AG04450 (cell line): ENCODE measurements at regions of chr18 and their contacts with region 1.

Region 1: DNA sequence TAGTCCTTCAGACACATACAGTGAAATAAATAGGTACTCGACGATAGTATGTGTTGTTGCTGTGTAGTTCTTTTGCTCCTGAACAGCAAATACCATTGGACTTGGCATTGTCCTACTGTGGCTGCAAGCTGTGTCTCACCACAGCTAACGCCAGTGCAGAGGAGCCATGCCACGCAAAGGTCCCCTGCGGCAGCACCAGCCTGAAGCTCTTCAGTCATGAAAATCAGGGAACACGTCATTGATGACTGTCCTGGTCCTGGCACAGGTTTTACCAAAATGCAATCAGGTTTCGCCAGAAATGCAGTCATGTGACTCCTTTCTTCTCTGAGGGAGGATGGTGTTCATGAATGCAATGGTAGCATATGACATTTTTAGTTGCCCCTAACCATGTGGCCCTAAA is 107.9 kb downstream of the BCL2 start:
- DNase-seq: no peak
- H3K4me3 ChIP-seq: no peak overlapping the region
- H3K27ac ChIP-seq: no peak overlapping the region
- H3K27me3 ChIP-seq: peaks cover 8% of the 10 kb centered on the region
- CTCF ChIP-seq: no peak

Region 2: GRCh38 chr18:62904396-62905285 is 307.0 kb before region 1 on chr18:
- CTCF ChIA-PET with region 1: no interaction called
- POLR2A ChIA-PET with region 1: interaction called, 14 read pairs
- DNase-seq: no peak
- H3K4me3 ChIP-seq: no peak overlapping the region
- H3K27ac ChIP-seq: no peak overlapping the region
- H3K27me3 ChIP-seq: no peaks in the 10 kb centered on the region
- CTCF ChIP-seq: no peak